ENCODE measurements at regions of chr12 and their contacts with region 1.

Region 1: DNA sequence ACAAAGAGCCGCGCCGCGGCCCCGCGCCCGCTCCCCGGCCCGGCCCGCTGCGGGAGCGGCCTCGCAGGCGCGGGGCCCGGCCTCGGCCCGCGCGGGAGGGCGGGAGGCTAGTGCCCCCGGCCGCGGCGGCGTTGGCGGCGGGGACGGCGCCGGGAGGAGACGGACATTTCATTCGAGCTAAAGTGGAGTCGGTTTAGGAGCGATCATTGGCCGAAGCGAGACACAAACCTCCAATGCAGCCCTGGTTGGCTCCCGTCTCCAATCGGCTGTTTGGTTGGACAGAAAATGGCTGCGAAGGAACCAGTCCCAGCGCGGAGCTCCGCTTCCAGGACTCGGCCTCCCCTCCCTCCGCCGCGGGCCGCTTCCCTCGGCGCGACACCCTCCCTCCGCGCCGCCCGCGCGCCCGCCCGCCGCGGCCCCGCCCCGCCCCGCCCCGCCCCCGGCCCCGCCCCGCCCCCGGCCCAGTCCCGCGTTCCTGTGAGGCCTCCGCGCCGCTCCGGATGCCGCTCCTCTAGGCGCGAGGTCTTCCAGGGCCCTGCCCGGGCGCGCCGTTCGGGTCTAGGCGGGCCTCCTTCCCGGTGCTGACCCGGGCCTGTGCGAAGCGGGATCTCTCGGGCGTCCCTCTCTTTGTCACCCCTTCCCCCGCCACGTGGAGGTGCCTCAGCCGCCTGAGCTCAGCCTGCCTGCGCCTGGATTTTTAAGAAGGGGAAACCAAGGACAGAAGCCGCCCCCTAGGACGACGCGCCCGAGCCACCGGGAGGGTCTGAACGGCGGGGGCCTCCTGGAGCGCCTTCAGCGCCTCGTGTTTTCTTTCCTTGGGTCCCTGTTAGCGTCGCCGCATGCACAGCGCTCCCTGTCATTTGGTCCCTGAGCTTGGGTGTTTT is at the start of gene NFYB:
- DNase-seq: peak; percentile 95
- ATAC-seq: peak; percentile 97
- H3K4me3 ChIP-seq: peak within 1 kb of the TSS; percentile 65 to 95 (median 84)
- H3K27ac ChIP-seq: peak within 1 kb of the TSS; percentile 92
- H3K4me1 ChIP-seq: peaks cover 41% of the 10 kb centered on the region
- H3K27me3 ChIP-seq: peaks cover 0 to 4% of the 10 kb centered on the region in 2 experiments; a peak in 2 of 5 replicates
- CTCF ChIP-seq: no peak
- EP300 ChIP-seq: peak in 1 of 2 experiments; percentile 99; a peak in 2 of 4 replicates
- POLR2A ChIP-seq: peak; percentile 64 to 87
- RAD21 ChIP-seq: no peak
- total RNA-seq, gene NFYB: 36.6 and 48.7 TPM in 2 replicates

Region 2: GRCh38 chr12:103965590-103966504 is 172.3 kb before region 1 on chr12 and contains the start of gene TDG:
- CTCF ChIA-PET with region 1: no interaction called
- POLR2A ChIA-PET with region 1: interaction called, 22 read pairs
- in situ Hi-C with region 1: no loop called
- intact Hi-C with region 1: loop called (anchors 10 kb)
- DNase-seq: peak; percentile 98
- ATAC-seq: peak; percentile 99
- H3K4me3 ChIP-seq: peak within 1 kb of the TSS; percentile 68 to 98 (median 82)
- H3K27ac ChIP-seq: peak within 1 kb of the TSS; percentile 86
- H3K4me1 ChIP-seq: peaks cover 62% of the 10 kb centered on the region
- H3K27me3 ChIP-seq: no peaks in the 10 kb centered on the region; a peak in 1 of 5 replicates
- CTCF ChIP-seq: peak; percentile 48; the same call in 1 of the 2 replicates
- EP300 ChIP-seq: no peak
- POLR2A ChIP-seq: peak; percentile 92 to 97
- RAD21 ChIP-seq: peak; percentile 57
- total RNA-seq, gene TDG: 19.5 and 24.0 TPM in 2 replicates